ENCODE measurements at regions of chr11 and their contacts with region 1.

Region 1: GRCh38 chr11:18987454-18988231 is 48.4 kb upstream of the MRGPRX1 start:
- DNase-seq: no peak
- H3K4me3 ChIP-seq: no peak overlapping the region
- H3K27ac ChIP-seq: no peak overlapping the region
- H3K4me1 ChIP-seq: no peaks in the 10 kb centered on the region
- H3K27me3 ChIP-seq: no peaks in the 10 kb centered on the region
- CTCF ChIP-seq: no peak
- POLR2A ChIP-seq: no peak

Region 2: DNA sequence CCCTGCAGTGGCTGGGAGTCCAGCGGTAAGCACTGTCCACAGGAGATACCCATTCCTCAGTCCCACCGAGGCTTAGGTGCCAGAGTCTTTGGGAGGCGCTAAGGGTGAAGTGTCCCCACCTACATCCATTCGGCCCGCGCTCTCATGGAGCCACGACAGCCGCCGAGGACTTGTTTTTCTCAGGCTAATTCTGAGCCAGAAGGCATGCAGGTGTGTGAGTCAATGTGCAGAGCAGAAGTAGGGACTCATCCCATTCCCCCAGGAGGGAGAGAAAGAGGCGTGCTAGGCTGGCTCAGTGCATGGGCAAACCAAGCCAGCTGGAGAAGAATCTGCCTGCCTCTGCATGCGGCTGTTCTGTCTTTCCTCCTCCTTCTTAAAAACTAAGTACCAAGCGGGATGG is 1206.4 kb before region 1 on chr11:
- intact Hi-C with region 1: no loop called
- DNase-seq: no peak
- H3K4me3 ChIP-seq: no peak overlapping the region
- H3K27ac ChIP-seq: no peak overlapping the region
- H3K4me1 ChIP-seq: no peaks in the 10 kb centered on the region
- H3K27me3 ChIP-seq: no peaks in the 10 kb centered on the region
- CTCF ChIP-seq: no peak
- POLR2A ChIP-seq: no peak

Region 3: DNA sequence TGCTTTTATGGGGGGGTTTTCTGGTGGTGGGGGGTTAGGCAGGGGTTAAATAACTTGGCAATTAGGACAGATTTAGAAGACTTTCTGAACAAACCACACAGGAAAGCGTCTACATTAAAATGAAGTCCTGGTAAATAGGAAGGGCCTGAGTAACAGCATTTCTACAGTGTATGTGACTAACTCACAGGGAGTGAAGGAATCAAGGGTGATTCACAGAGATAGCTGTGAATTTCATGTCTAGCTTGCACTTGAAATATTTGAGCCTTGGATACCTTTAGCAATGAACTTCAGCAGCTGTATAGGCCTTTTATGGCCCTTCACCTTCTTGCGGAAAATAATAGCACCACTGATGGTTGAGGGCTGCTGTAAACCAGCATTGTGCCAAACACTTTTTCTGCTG is 619.4 kb before region 1 on chr11:
- intact Hi-C with region 1: no loop called
- DNase-seq: no peak
- H3K4me3 ChIP-seq: no peak overlapping the region
- H3K27ac ChIP-seq: no peak overlapping the region
- H3K4me1 ChIP-seq: no peaks in the 10 kb centered on the region
- H3K27me3 ChIP-seq: no peaks in the 10 kb centered on the region
- CTCF ChIP-seq: no peak
- POLR2A ChIP-seq: no peak

Region 4: GRCh38 chr11:19027829-19028595 is 40.4 kb after region 1 on chr11:
- intact Hi-C with region 1: loop called (anchors 2 kb)
- DNase-seq: peak in 1 of 2 donors; percentile 32
- H3K4me3 ChIP-seq: no peak overlapping the region
- H3K27ac ChIP-seq: no peak overlapping the region
- H3K4me1 ChIP-seq: no peaks in the 10 kb centered on the region
- H3K27me3 ChIP-seq: peaks cover 0 to 35% of the 10 kb centered on the region in 2 donors
- CTCF ChIP-seq: no peak
- POLR2A ChIP-seq: no peak

Region 5: GRCh38 chr11:19060629-19061028 is 73.0 kb after region 1 on chr11 and contains the start of gene MRGPRX2:
- intact Hi-C with region 1: no loop called
- DNase-seq: no peak
- H3K4me3 ChIP-seq: no peak within 1 kb of the TSS
- H3K27ac ChIP-seq: no peak within 1 kb of the TSS
- H3K4me1 ChIP-seq: no peaks in the 10 kb centered on the region
- H3K27me3 ChIP-seq: no peaks in the 10 kb centered on the region
- CTCF ChIP-seq: no peak
- POLR2A ChIP-seq: no peak
- total RNA-seq, gene MRGPRX2: 1.4 TPM in 1 of 3 donors, not detected in the others

Measured in breast epithelium (tissue), 4 donors.